A673 (cell line): ENCODE measurements at regions of chr1 and their contacts with region 1.

Region 1: GRCh38 chr1:904310-904950 is 19.3 kb upstream of the SAMD11 start:
- DNase-seq: peak; percentile 90
- H3K4me3 ChIP-seq: peak overlapping the region; percentile 54
- H3K27ac ChIP-seq: peak overlapping the region; percentile 77
- H3K4me1 ChIP-seq: peaks cover 20% of the 10 kb centered on the region
- H3K27me3 ChIP-seq: no peaks in the 10 kb centered on the region
- CTCF ChIP-seq: peak; percentile 66

Region 2: DNA sequence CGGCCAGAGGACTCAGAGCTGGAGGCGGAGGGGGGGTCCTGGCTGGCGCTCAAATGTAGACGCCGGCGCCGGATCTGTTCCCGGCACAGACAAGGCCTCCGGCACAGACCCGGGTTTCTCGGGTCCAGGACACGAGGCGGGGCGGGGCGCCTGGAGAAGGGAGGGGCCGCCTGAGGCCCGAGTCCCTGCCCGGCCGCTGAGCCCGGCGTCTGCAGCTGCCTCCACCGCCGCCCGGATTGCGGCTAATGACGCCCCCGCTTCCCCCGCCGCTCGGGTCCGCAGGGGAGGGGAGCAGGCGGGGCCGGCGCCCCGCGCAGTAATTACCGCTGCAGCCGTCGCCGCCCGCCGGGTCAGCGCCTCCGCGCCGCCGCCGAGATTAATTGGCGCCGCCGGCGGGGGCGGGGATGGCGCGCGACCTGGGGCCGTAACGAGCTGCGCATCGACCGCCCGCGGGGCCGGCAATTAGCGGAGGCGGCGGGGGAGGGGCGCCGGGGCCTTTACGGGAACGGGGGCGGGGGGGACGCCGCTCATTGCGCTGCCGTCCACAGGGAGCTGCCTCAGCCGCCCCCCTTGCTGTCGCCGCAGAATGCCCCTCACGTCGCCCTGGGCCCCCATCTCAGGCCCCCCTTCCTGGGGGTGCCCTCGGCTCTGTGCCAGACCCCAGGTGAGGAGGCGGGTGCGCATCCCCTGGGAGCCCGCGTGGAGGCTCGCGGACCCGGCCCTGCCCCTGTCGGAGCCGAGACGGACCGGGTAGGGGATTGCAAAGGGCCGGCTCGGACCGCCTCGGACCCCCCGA is 37.4 kb after region 1 on chr1:
- CTCF ChIA-PET with region 1: interaction called, 5 read pairs
- POLR2A ChIA-PET with region 1: no interaction called
- intact Hi-C with region 1: loop called (anchors 2 kb)
- DNase-seq: peak; percentile 97
- H3K4me3 ChIP-seq: peak overlapping the region; percentile 45
- H3K27ac ChIP-seq: peak overlapping the region; percentile 59
- H3K4me1 ChIP-seq: peaks cover 79% of the 10 kb centered on the region
- H3K27me3 ChIP-seq: no peaks in the 10 kb centered on the region
- CTCF ChIP-seq: no peak

Region 3: GRCh38 chr1:951364-951763 is 46.9 kb after region 1 on chr1:
- CTCF ChIA-PET with region 1: interaction called, 10 read pairs
- POLR2A ChIA-PET with region 1: no interaction called
- intact Hi-C with region 1: no loop called
- DNase-seq: peak; percentile 51
- H3K4me3 ChIP-seq: no peak overlapping the region
- H3K27ac ChIP-seq: no peak overlapping the region
- H3K4me1 ChIP-seq: no peaks in the 10 kb centered on the region
- H3K27me3 ChIP-seq: no peaks in the 10 kb centered on the region
- CTCF ChIP-seq: peak; percentile 56